ENCODE measurements at regions of chr12 and their contacts with region 1.

Region 1: GRCh38 chr12:93127582-93128331 is 198.7 kb upstream of the EEA1 start:
- DNase-seq: peak; percentile 85
- H3K4me3 ChIP-seq: no peak overlapping the region
- H3K27ac ChIP-seq: peak overlapping the region; percentile 74 to 75
- H3K4me1 ChIP-seq: no peaks in the 10 kb centered on the region
- H3K27me3 ChIP-seq: no peaks in the 10 kb centered on the region
- CTCF ChIP-seq: peak in 3 of 4 experiments; percentile 0 to 61 (median 22)
- POLR2A ChIP-seq: no peak

Region 2: DNA sequence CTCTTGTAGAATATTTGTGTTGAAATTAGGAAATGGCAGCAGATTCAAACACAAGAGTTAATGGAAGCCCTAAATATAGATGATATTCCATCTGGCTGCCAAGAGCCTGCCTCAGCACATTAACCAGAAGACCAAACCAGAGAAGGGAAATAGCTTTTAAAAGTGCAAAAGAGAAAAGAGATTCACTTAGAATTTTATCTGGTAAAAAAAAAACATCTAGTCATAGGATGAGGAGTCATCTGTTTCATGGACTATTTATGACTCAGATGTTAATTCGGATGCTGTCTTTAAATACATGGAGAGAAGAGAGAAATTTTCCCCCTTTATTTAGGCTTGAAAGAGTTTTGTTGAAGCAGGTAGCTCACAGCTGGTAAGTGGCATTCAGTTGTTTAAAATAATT is 48.4 kb after region 1 on chr12:
- intact Hi-C with region 1: loop called (anchors 2 kb)
- DNase-seq: no peak
- H3K4me3 ChIP-seq: no peak overlapping the region
- H3K27ac ChIP-seq: peak overlapping the region; percentile 51 to 67
- H3K4me1 ChIP-seq: peaks cover 9% of the 10 kb centered on the region
- H3K27me3 ChIP-seq: no peaks in the 10 kb centered on the region
- CTCF ChIP-seq: no peak
- POLR2A ChIP-seq: no peak

Region 3: DNA sequence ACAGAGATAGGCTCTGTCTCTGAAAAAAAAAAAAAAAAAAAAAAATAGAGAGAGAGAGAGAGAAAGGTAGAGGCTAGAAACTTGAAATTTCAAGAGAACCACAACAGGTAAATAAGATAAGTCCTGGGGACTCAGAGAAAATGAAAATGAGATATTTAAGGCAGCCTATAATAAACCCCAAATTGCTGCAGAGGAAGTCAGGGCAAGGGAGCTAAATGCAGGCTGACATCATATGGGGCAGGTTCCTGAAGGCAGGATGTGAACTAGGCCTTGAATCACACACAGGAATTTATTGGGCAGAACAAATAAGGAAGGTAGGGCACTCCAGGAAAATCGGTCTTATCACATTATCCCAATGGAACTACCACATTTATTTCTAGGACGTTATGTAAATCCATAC is 195.0 kb after region 1 on chr12:
- intact Hi-C with region 1: no loop called
- DNase-seq: no peak
- H3K4me3 ChIP-seq: no peak overlapping the region
- H3K27ac ChIP-seq: no peak overlapping the region
- H3K4me1 ChIP-seq: no peaks in the 10 kb centered on the region
- H3K27me3 ChIP-seq: no peaks in the 10 kb centered on the region
- CTCF ChIP-seq: no peak
- POLR2A ChIP-seq: no peak

Measured in prostate gland (tissue), 2 donors.